CD8-positive, alpha-beta T cell (primary cell): ENCODE measurements at regions of chr20 and their contacts with region 1.

Region 1: DNA sequence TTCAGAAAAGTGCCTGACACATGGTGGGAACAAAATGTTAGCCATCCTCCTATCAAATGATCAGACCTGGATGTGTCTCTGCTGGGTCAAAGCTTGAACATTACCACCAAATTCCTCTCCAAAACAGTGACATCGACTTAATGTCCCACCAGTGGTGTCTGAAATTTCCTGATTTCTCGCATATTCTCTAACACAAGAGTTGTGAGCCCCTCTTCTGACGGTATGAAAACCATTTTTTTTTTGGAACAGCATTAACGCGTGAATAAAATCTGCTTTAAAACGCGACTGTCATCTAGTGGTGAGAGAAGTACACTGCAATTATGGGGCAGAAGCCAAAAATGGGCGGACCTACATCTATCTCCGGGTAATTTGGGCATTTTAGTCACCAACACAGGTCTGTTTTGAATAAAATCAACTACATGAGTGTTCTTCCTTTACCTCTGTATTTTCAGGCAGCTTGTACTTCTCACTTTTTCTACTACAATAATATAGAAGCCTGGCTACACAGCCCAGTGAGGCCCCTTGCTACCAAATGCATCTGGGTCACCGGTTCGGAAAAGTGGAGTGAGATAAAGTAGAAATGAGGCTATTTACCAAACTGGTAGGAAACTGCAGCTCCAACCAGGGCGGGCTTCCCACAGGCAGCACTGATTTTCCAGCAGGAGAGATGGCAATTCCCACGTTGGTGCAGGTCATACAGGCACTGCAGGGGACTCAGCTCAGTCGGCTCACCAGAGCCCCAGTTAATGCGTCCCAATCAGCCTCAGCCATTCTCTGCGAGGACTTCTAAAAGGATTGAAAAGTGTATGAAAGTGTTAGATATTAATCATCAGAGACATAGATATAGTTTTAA is 27.4 kb downstream of the MGME1 start:
- DNase-seq: peak in 6 of 9 experiments; percentile 11 to 78 (median 38)
- ATAC-seq: peak; percentile 97
- H3K4me3 ChIP-seq: no peak overlapping the region
- H3K4me3 Mint-ChIP-seq: no peak overlapping the region
- H3K27ac ChIP-seq: no peak overlapping the region
- H3K27ac Mint-ChIP-seq: no peak overlapping the region
- H3K4me1 ChIP-seq: no peaks in the 10 kb centered on the region
- H3K4me1 Mint-ChIP-seq: peaks cover 9% of the 10 kb centered on the region
- H3K27me3 ChIP-seq: no peaks in the 10 kb centered on the region
- H3K27me3 Mint-ChIP-seq: peaks cover 19% of the 10 kb centered on the region
- CTCF ChIP-seq: peak; percentile 97

Region 2: GRCh38 chr20:17938871-17939619 is 57.1 kb before region 1 on chr20:
- CTCF ChIA-PET with region 1: interaction called, 11 read pairs
- POLR2A ChIA-PET with region 1: no interaction called
- intact Hi-C with region 1: no loop called
- DNase-seq: peak; percentile 17 to 81 (median 57)
- ATAC-seq: peak; percentile 95
- H3K4me3 ChIP-seq: no peak overlapping the region
- H3K4me3 Mint-ChIP-seq: peak overlapping the region; percentile 50
- H3K27ac ChIP-seq: no peak overlapping the region
- H3K27ac Mint-ChIP-seq: peak overlapping the region; percentile 71
- H3K4me1 ChIP-seq: peaks cover 12% of the 10 kb centered on the region
- H3K4me1 Mint-ChIP-seq: peaks cover 16% of the 10 kb centered on the region
- H3K27me3 ChIP-seq: no peaks in the 10 kb centered on the region
- H3K27me3 Mint-ChIP-seq: no peaks in the 10 kb centered on the region
- CTCF ChIP-seq: peak; percentile 87